Esophagus squamous epithelium (tissue), 5 donors: ENCODE measurements at regions of chr7 and their contacts with region 1.

Region 1: DNA sequence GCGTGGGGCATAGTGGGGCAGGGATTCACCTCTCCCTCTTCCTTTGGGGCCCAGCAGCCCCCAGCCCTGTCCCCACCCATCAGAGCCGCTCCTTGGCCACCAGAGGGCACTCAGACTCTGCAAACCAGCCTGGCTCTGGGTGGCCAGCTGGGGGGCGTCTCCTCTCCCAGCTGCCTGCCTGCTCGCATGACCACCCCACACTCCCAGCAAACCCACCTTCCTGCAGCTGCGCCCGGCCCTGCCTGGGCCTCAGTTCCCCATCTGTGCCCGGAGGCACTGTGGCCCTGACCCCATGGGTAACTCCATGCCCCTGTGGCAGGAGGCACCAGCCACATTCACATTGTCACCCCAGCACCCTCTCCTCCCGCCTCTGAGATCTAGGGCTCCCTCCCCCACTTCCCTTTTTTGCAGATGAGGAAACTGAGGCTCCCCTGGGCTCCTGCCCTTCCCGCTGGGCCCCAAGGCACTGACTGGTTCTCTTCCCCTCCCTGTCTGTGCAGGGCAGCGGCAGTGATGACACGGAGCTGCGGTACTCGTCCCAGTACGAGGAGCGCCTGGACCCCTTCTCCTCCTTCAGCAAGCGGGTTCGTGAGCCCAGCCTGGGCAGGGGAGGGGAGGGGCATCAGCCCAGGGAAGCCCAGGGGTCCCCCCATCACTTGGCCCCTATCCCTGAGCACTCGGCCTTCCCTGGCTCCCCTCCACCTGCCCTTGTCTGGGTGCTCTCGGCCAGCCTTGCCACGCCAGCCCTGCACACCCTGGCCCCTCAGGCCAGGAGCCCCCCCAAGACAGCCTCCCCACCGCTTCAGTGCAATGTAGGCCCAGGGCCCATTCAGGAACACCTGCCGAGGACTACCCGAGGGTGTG is 6.9 kb upstream of the SH2B2 start:
- DNase-seq: no peak
- H3K4me3 ChIP-seq: no peak overlapping the region
- H3K27ac ChIP-seq: no peak overlapping the region
- H3K4me1 ChIP-seq: peaks cover 0 to 8% (median 0%) of the 10 kb centered on the region in 3 donors
- H3K27me3 ChIP-seq: no peaks in the 10 kb centered on the region
- CTCF ChIP-seq: peak; percentile 53 to 83 (median 76)
- POLR2A ChIP-seq: no peak

Region 2: DNA sequence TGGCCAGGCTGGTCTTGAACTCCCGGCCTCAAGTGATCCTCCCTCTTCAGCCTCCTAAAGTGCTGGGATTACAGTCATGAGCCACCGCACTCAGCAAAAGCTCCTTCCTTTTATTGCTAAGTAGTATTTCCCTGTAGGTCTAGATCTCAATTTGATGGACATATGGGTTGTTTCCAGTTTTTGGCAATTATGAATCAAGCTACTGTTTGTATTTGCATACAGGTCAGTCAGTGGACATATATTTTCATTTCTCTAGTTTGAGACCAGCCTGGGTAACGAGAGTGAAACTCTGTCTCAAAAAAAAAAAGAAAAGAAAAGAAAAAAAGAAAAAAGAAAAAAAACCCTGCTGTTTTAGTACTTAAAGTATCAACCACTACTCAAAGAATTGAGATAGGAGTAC is 110.0 kb after region 1 on chr7:
- intact Hi-C with region 1: loop called (anchors 5 kb)
- DNase-seq: no peak
- H3K4me3 ChIP-seq: no peak overlapping the region
- H3K27ac ChIP-seq: no peak overlapping the region
- H3K4me1 ChIP-seq: peaks cover 0 to 4% (median 0%) of the 10 kb centered on the region in 3 donors
- H3K27me3 ChIP-seq: no peaks in the 10 kb centered on the region
- CTCF ChIP-seq: no peak
- POLR2A ChIP-seq: no peak

Region 3: GRCh38 chr7:102464577-102465280 is 185.0 kb after region 1 on chr7 and contains the starts of genes ALKBH4 and LRWD1:
- intact Hi-C with region 1: loop called (anchors 10 kb)
- DNase-seq: peak; percentile 68
- H3K4me3 ChIP-seq: peak within 1 kb of the TSS; percentile 71 to 88 (median 86)
- H3K27ac ChIP-seq: peak within 1 kb of the TSS; percentile 74 to 85 (median 79)
- H3K4me1 ChIP-seq: peaks cover 5 to 42% (median 16%) of the 10 kb centered on the region in 3 donors
- H3K27me3 ChIP-seq: no peaks in the 10 kb centered on the region
- CTCF ChIP-seq: peak in 5 of 6 experiments; percentile 10 to 69 (median 24)
- POLR2A ChIP-seq: peak in 3 of 4 donors; percentile 40 to 65 (median 59)
- total RNA-seq, gene ALKBH4: 7.3 to 31.7 (median 13.3) TPM
- total RNA-seq, gene LRWD1: 5.8 to 16.9 (median 11.2) TPM